B cell (primary cell): ENCODE measurements at regions of chr3 and their contacts with region 1.

Region 1: DNA sequence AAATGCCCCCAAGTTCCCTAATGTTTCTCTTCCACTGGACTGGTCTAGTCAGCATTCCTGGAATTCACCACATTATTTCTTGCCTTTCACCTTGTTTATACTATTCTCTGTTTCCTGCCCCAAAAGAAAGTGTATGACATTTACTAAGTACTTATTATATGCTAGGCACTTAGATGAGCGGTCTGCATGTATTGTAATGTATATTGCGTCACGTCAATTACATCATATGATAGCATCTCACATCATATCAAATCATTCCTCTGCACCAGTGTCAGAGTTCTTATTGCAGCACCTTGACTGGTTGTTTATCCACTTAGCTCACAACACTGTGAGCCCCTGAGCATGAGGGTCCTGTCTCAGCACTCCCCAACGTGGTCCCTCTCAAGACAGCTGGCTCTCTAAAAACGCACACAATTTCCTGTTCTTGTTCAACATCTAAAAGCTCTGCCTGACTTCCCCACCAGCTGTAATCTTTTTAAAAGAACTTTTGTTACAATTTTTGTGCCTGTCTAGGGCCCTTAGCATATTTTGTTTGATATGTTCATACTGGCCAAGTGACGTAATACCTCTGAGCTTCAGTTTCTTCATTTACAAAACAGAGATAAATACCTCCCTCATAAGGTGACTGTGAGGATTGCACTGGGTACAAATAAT is 58.8 kb downstream of the ARHGAP31 start:
- DNase-seq: peak; percentile 63
- ATAC-seq: peak; percentile 35
- H3K4me3 ChIP-seq: no peak overlapping the region
- H3K4me3 Mint-ChIP-seq: peak overlapping the region; percentile 46
- H3K27ac ChIP-seq: peak overlapping the region in 1 of 2 donors; percentile 56
- H3K27ac Mint-ChIP-seq: peak overlapping the region; percentile 51
- H3K4me1 ChIP-seq: peaks cover 22 to 29% of the 10 kb centered on the region in 2 donors
- H3K4me1 Mint-ChIP-seq: peaks cover 36% of the 10 kb centered on the region
- H3K27me3 ChIP-seq: no peaks in the 10 kb centered on the region
- H3K27me3 Mint-ChIP-seq: no peaks in the 10 kb centered on the region
- CTCF ChIP-seq: peak; percentile 61

Region 2: GRCh38 chr3:119145500-119146191 is 207.3 kb before region 1 on chr3 and contains the start of gene TEX55:
- CTCF ChIA-PET with region 1: interaction called, 12 read pairs
- POLR2A ChIA-PET with region 1: no interaction called
- intact Hi-C with region 1: loop called (anchors 2 kb)
- DNase-seq: peak; percentile 18
- ATAC-seq: no peak
- H3K4me3 ChIP-seq: no peak within 1 kb of the TSS
- H3K4me3 Mint-ChIP-seq: no peak within 1 kb of the TSS
- H3K27ac ChIP-seq: no peak within 1 kb of the TSS
- H3K27ac Mint-ChIP-seq: no peak within 1 kb of the TSS
- H3K4me1 ChIP-seq: no peaks in the 10 kb centered on the region
- H3K4me1 Mint-ChIP-seq: no peaks in the 10 kb centered on the region
- H3K27me3 ChIP-seq: no peaks in the 10 kb centered on the region
- H3K27me3 Mint-ChIP-seq: no peaks in the 10 kb centered on the region
- CTCF ChIP-seq: peak; percentile 35
- total RNA-seq, gene TEX55: not detected in 2 replicates

Region 3: DNA sequence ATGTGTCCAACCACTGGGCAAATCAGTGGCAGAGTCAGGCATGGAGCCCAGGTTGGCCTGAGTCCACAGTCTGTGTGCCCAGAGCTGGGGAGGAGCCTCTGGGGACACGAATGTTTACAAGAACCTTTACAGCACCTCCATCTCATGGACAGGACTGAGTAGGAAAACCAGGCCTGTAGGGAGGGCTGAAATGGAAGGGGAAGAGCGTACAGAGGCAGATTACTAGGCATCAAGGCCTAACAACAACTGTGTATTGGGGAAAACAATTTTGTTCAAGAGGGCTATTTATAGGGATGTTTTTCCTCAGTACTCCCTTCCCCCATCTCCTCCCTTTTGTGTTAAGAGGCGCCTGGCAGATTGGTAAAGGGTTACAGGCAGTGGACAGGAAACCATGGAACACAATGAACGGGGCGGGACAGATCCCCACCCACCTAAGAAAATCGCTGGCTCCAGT is 73.8 kb before region 1 on chr3:
- CTCF ChIA-PET with region 1: interaction called, 60 read pairs
- POLR2A ChIA-PET with region 1: no interaction called
- intact Hi-C with region 1: loop called (anchors 1 kb)
- DNase-seq: no peak
- ATAC-seq: no peak
- H3K4me3 ChIP-seq: no peak overlapping the region
- H3K4me3 Mint-ChIP-seq: no peak overlapping the region
- H3K27ac ChIP-seq: no peak overlapping the region
- H3K27ac Mint-ChIP-seq: no peak overlapping the region
- H3K4me1 ChIP-seq: no peaks in the 10 kb centered on the region
- H3K4me1 Mint-ChIP-seq: no peaks in the 10 kb centered on the region
- H3K27me3 ChIP-seq: no peaks in the 10 kb centered on the region
- H3K27me3 Mint-ChIP-seq: no peaks in the 10 kb centered on the region
- CTCF ChIP-seq: no peak

Region 4: GRCh38 chr3:119293871-119294695 is 58.9 kb before region 1 on chr3 and contains the start of gene ARHGAP31:
- CTCF ChIA-PET with region 1: interaction called, 18 read pairs
- POLR2A ChIA-PET with region 1: interaction called, 7 read pairs
- intact Hi-C with region 1: loop called (anchors 2 kb)
- DNase-seq: peak; percentile 89
- ATAC-seq: peak; percentile 76
- H3K4me3 ChIP-seq: peak within 1 kb of the TSS; percentile 61 to 89 (median 80)
- H3K4me3 Mint-ChIP-seq: peak within 1 kb of the TSS; percentile 87
- H3K27ac ChIP-seq: peak within 1 kb of the TSS; percentile 91 to 96
- H3K27ac Mint-ChIP-seq: peak within 1 kb of the TSS; percentile 91
- H3K4me1 ChIP-seq: peaks cover 30 to 46% of the 10 kb centered on the region in 2 donors
- H3K4me1 Mint-ChIP-seq: peaks cover 58% of the 10 kb centered on the region
- H3K27me3 ChIP-seq: peaks cover 0 to 7% (median 0%) of the 10 kb centered on the region in 4 experiments
- H3K27me3 Mint-ChIP-seq: no peaks in the 10 kb centered on the region
- CTCF ChIP-seq: no peak
- total RNA-seq, gene ARHGAP31: 7.8 and 8.3 TPM in 2 replicates

Region 5: GRCh38 chr3:119559441-119559963 is 206.5 kb after region 1 on chr3 and contains the start of gene CD80:
- CTCF ChIA-PET with region 1: no interaction called
- POLR2A ChIA-PET with region 1: no interaction called
- intact Hi-C with region 1: no loop called
- DNase-seq: peak; percentile 85
- ATAC-seq: peak; percentile 60
- H3K4me3 ChIP-seq: peak within 1 kb of the TSS in 4 of 5 experiments; percentile 42 to 71 (median 60)
- H3K4me3 Mint-ChIP-seq: peak within 1 kb of the TSS; percentile 75
- H3K27ac ChIP-seq: peak within 1 kb of the TSS; percentile 71 to 92
- H3K27ac Mint-ChIP-seq: peak within 1 kb of the TSS; percentile 91
- H3K4me1 ChIP-seq: peaks cover 49 to 71% of the 10 kb centered on the region in 2 donors
- H3K4me1 Mint-ChIP-seq: peaks cover 80% of the 10 kb centered on the region
- H3K27me3 ChIP-seq: no peaks in the 10 kb centered on the region
- H3K27me3 Mint-ChIP-seq: no peaks in the 10 kb centered on the region
- CTCF ChIP-seq: peak; percentile 58
- total RNA-seq, gene CD80: 26.5 and 28.0 TPM in 2 replicates